Mammary epithelial cell (primary cell): ENCODE measurements at regions of chr16 and their contacts with region 1.

Region 1: DNA sequence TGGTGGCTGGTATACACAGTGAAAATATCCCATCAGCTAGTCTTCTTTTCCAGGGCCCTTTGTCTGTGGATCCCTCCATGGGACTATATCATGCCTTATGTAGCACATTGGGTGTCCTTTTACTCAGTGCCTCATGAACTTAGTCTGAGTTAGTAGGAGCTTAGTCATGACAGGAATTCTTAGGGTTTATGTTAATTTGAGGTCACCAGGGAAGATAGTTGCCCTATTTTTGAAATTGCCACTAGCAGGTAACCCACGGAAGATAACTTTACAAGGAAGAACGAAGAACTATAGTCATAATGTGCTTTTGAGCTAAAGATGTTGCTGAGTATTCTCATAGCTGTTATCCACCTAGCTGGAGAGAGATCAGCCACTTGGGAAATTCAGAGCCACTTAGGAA is 14.8 kb upstream of the PLK1 start:
- DNase-seq: no peak
- H3K4me3 ChIP-seq: no peak overlapping the region
- H3K27ac ChIP-seq: no peak overlapping the region
- H3K4me1 ChIP-seq: no peaks in the 10 kb centered on the region
- H3K27me3 ChIP-seq: no peaks in the 10 kb centered on the region
- CTCF ChIP-seq: no peak

Region 2: GRCh38 chr16:23650674-23651416 is 13.1 kb before region 1 on chr16:
- CTCF ChIA-PET with region 1: no interaction called
- dilution Hi-C with region 1: no loop called
- in situ Hi-C with region 1: no loop called
- intact Hi-C with region 1: loop called (anchors 2 kb)
- DNase-seq: no peak
- H3K4me3 ChIP-seq: no peak overlapping the region
- H3K27ac ChIP-seq: no peak overlapping the region
- H3K4me1 ChIP-seq: no peaks in the 10 kb centered on the region
- H3K27me3 ChIP-seq: no peaks in the 10 kb centered on the region
- CTCF ChIP-seq: no peak

Region 3: DNA sequence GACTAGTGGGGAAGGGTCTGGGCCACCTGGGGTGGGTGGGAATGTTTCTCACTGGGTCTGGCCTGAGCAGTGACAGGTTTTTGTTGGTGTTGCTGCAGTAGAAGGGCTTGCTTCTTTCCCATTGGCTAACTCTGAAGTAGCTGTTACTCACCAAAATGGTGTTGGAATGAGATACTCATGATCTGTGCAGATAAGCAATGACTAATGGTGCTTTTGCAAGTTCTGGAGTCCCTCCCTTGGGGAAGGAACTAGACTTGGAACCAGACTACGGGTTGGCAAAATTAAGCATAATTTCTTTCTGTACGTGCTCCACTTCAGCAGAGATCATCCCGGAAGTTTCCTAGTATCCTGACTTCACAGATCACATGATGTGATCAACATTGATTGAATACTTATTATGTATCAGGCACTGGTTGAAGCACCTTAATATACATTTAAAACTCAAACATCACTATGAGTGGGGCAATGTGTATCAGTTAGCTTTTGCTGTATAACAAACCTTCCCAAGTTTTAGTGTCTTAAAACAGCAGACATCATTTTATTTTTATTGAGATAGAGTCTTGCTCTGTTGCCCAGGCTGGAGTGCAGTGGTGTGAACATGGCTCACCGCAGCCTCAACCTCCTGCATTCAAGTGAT is 121.0 kb after region 1 on chr16:
- CTCF ChIA-PET with region 1: no interaction called
- dilution Hi-C with region 1: no loop called
- in situ Hi-C with region 1: no loop called
- intact Hi-C with region 1: no loop called
- DNase-seq: peak; percentile 88
- H3K4me3 ChIP-seq: no peak overlapping the region
- H3K27ac ChIP-seq: no peak overlapping the region
- H3K4me1 ChIP-seq: no peaks in the 10 kb centered on the region
- H3K27me3 ChIP-seq: peaks cover 2% of the 10 kb centered on the region
- CTCF ChIP-seq: no peak